ENCODE measurements at regions of chr11 and their contacts with region 1.

Region 1: DNA sequence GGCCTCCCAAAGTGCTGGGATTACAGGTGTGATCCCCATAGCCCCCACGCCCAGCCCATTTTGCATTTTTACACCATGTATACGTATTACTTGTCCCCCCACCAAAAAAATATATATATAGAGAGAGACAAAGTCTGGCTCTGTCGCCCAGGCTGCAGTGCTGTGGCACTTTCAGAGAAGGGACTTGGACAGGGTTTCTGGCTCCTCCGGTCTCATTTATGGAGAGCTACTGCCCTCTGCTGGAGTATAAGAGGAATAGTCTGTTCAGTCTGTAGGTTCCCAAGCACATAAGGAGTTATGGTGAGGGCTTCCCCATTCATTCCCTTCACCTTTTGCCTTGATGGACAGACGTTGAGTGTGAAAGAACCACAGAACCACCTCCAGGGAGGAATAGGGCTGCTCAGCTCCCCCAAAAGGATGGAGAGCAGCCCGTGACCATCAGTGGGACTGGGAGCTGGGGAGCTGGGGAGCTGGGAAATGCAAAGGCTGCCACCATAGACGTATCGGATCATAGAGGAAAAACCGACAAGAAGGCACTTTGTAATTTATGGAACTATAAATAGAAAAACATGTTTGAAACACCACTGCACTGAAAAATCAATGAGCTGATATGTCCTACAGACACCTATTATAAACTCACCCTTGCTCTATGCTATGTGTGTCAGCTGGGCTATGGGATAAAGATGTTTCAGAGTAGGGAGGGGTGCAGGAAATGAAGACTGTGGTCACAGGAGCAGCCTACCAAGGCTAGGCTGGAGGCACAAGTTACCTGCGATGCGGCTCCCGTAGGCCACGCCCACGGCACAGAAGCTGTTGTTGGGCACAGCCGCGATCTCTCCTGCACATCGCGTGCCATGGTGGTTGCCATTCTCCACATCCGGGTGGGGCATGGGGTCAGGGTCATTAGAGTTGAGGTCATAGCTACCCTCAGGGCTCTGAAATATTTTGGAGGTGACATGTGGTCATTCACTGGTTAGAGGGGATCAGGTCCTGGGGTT is 5.2 kb downstream of the PCSK7 start:
- DNase-seq: peak; percentile 66 to 72 (median 68)
- H3K4me3 ChIP-seq: no peak overlapping the region
- H3K4me3 Mint-ChIP-seq: peak overlapping the region in 3 of 8 donors; percentile 21 to 66 (median 25)
- H3K27ac ChIP-seq: peak overlapping the region; percentile 7
- H3K27ac Mint-ChIP-seq: peak overlapping the region; percentile 80 to 94 (median 84)
- H3K4me1 ChIP-seq: peaks cover 46% of the 10 kb centered on the region
- H3K4me1 Mint-ChIP-seq: peaks cover 27 to 60% (median 39%) of the 10 kb centered on the region in 4 donors
- H3K27me3 ChIP-seq: no peaks in the 10 kb centered on the region
- H3K27me3 Mint-ChIP-seq: no peaks in the 10 kb centered on the region

Region 2: DNA sequence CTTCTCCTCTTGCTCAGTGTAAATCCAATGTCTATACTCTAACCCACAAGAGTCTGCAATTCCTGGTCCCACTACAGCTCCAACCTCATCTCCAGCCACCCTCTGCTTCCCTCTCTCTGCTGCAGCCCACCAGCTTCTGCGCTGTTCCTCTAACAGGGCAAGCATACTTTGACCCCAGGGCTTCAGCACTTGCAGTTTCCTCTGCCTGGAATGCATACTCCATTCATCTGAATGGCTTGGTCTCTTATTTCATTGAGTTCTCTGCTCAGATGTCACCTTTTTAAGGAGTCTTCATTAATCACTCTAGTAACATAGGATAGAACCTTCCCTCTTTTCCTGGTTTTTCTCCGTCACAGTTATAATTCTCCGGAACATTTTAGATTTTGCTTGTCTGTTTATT is 595.5 kb before region 1 on chr11:
- CTCF ChIA-PET with region 1: no interaction called
- POLR2A ChIA-PET with region 1: no interaction called
- intact Hi-C with region 1: no loop called
- DNase-seq: no peak
- H3K4me3 ChIP-seq: no peak overlapping the region
- H3K4me3 Mint-ChIP-seq: no peak overlapping the region
- H3K27ac ChIP-seq: no peak overlapping the region
- H3K27ac Mint-ChIP-seq: no peak overlapping the region
- H3K4me1 ChIP-seq: no peaks in the 10 kb centered on the region
- H3K4me1 Mint-ChIP-seq: no peaks in the 10 kb centered on the region
- H3K27me3 ChIP-seq: no peaks in the 10 kb centered on the region
- H3K27me3 Mint-ChIP-seq: peaks cover 7 to 9% of the 10 kb centered on the region in 2 donors

Region 3: DNA sequence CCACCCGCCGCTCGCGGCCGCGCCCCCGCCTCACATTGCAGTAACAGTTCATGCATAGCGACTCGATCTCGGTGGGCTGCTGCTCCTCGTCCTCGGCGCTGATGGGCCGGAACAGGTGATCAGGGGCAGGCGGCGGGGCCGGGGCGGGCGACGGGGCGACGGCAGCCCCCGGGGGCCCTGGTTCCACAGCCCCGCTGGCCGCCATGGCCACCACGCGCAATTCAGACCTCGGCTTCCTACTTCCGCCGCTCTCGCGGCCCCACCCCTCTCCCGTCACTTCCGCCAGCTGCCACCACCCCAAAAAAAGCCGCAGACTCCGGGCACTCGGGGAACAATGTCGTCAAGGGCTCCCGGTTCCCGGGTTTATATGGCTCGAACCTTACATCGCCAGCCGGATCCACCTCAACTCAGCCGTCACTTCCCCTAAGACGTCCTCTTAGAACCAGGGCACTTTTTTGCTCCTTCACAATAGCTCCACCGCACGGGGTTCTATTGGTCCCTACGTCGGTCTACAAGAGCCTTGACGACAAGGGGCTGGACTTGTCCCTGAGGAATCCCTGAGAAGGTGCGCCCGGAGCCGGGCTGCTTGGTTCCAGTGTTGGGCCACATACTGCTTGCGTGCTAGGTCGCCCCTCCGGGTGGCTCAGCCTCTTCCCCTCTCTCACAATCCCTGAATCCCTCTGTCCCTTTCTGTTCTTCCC is 438.8 kb before region 1 on chr11 and contains the start of gene ZPR1:
- CTCF ChIA-PET with region 1: interaction called, 12 read pairs
- POLR2A ChIA-PET with region 1: interaction called, 5 read pairs
- intact Hi-C with region 1: loop called (anchors 1 kb)
- DNase-seq: peak; percentile 86 to 89 (median 86)
- H3K4me3 ChIP-seq: peak within 1 kb of the TSS; percentile 55 to 90
- H3K4me3 Mint-ChIP-seq: peak within 1 kb of the TSS; percentile 91 to 98 (median 97)
- H3K27ac ChIP-seq: peak within 1 kb of the TSS; percentile 84
- H3K27ac Mint-ChIP-seq: peak within 1 kb of the TSS; percentile 96 to 99 (median 98)
- H3K4me1 ChIP-seq: peaks cover 40% of the 10 kb centered on the region
- H3K4me1 Mint-ChIP-seq: peaks cover 30 to 66% (median 45%) of the 10 kb centered on the region in 4 donors
- H3K27me3 ChIP-seq: no peaks in the 10 kb centered on the region
- H3K27me3 Mint-ChIP-seq: peaks cover 0 to 2% of the 10 kb centered on the region in 2 donors
- total RNA-seq, gene ZPR1: 59.5 to 73.4 TPM

Region 4: DNA sequence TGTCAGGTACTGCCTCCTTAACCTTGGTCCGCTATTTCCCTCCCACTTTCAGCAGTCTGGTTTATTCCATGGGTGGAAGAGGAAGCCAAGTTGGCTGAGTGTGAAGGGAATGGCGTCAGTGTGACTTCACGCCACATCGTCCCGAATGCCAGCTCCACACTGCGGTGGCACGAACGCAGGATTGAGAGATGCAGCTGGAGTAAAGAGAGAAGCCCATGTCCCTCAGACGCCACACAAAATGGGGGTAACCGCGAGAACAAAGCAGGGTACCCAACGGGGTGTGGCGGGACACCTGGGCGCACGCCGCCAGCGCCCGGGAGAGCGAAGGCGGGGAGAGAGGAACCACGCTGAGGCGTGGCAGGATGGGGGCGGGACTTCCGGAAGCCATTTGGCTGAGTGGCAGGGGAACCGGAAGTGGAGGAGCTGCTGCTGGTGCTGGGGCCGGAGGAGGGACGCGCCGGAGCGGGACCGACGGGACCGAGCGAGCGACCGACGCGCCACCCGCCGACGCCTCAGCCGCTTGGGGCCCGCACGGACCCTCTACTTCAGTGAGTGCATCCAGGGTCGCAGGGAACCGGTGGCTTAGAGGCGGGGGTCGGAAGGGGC is 82.7 kb before region 1 on chr11 and contains the start of gene PAFAH1B2:
- CTCF ChIA-PET with region 1: interaction called, 17 read pairs
- POLR2A ChIA-PET with region 1: interaction called, 27 read pairs
- intact Hi-C with region 1: no loop called
- DNase-seq: peak; percentile 94 to 95 (median 94)
- H3K4me3 ChIP-seq: peak within 1 kb of the TSS; percentile 68 to 93
- H3K4me3 Mint-ChIP-seq: peak within 1 kb of the TSS; percentile 97 to 100 (median 99)
- H3K27ac ChIP-seq: peak within 1 kb of the TSS; percentile 70
- H3K27ac Mint-ChIP-seq: peak within 1 kb of the TSS; percentile 92 to 99 (median 98)
- H3K4me1 ChIP-seq: peaks cover 46% of the 10 kb centered on the region
- H3K4me1 Mint-ChIP-seq: peaks cover 33 to 56% (median 44%) of the 10 kb centered on the region in 4 donors
- H3K27me3 ChIP-seq: no peaks in the 10 kb centered on the region
- H3K27me3 Mint-ChIP-seq: peaks cover 2 to 6% of the 10 kb centered on the region in 2 donors
- total RNA-seq, gene PAFAH1B2: 61.6 to 64.2 TPM

Region 5: GRCh38 chr11:117239300-117239699 is 12.6 kb after region 1 on chr11:
- CTCF ChIA-PET with region 1: interaction called, 12 read pairs
- POLR2A ChIA-PET with region 1: interaction called, 4 read pairs
- intact Hi-C with region 1: no loop called
- DNase-seq: no peak
- H3K4me3 ChIP-seq: no peak overlapping the region
- H3K4me3 Mint-ChIP-seq: no peak overlapping the region
- H3K27ac ChIP-seq: no peak overlapping the region
- H3K27ac Mint-ChIP-seq: peak overlapping the region in 1 of 7 donors; percentile 39
- H3K4me1 ChIP-seq: no peaks in the 10 kb centered on the region
- H3K4me1 Mint-ChIP-seq: peaks cover 2 to 6% (median 3%) of the 10 kb centered on the region in 4 donors
- H3K27me3 ChIP-seq: no peaks in the 10 kb centered on the region
- H3K27me3 Mint-ChIP-seq: no peaks in the 10 kb centered on the region

Region 6: DNA sequence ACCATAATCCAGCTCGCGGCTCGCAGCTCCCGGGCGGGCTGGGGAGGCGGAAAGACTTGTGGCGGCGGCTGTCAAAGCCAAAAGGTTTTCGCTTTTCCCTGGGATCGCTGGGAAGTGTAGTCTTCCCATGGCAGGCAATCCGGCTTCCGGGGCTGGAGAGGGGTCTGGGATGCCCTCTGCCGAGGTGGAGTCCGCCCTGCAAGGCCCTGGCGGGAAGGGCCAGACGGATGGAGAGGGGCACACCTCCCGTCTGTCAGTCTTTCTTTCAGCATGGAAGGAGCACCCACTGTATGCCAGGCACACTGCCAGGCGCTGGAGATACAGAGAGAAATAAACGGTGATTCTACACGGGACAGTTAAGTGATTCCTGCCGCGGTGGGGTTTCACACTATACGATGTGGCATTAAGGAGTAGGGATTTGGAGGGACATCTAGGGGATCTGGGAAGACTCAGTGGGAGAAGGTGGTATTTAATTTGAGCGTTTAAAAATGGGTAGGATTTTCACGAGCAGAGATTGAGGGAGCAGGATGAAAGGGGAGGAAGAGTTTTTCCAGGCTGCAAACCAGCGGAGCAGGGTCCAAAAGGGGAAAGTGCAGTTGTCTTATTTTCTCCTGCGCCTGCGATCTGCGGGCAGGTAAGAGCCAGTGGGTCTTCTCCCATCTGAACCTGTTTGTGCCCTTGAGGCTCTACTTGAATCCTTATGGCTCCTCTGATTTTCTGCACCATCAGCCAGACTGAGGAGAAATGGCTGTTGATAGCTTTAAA is 89.7 kb after region 1 on chr11 and contains the start of gene BACE1:
- CTCF ChIA-PET with region 1: interaction called, 10 read pairs
- POLR2A ChIA-PET with region 1: interaction called, 4 read pairs
- intact Hi-C with region 1: no loop called
- DNase-seq: peak in 3 of 5 donors; percentile 5 to 17 (median 11)
- H3K4me3 ChIP-seq: peak within 1 kb of the TSS; percentile 39 to 63
- H3K4me3 Mint-ChIP-seq: peak within 1 kb of the TSS; percentile 86 to 92 (median 89)
- H3K27ac ChIP-seq: peak within 1 kb of the TSS; percentile 26
- H3K27ac Mint-ChIP-seq: peak within 1 kb of the TSS in 5 of 7 donors; percentile 39 to 89 (median 68)
- H3K4me1 ChIP-seq: peaks cover 17% of the 10 kb centered on the region
- H3K4me1 Mint-ChIP-seq: peaks cover 4 to 19% (median 12%) of the 10 kb centered on the region in 4 donors
- H3K27me3 ChIP-seq: peaks cover 7% of the 10 kb centered on the region
- H3K27me3 Mint-ChIP-seq: peaks cover 3 to 7% of the 10 kb centered on the region in 2 donors
- total RNA-seq, gene BACE1: 2.7 to 2.9 TPM

Measured in CD4-positive, alpha-beta memory T cell (primary cell).